Activated CD4-positive, alpha-beta T cell treated with anti-CD3 and anti-CD28 coated beads, Interleukin-2, amount 10 ng/mL, durations not matched to agents 7 days and 5 days (primary cell): ENCODE measurements at regions of chr12 and their contacts with region 1.

Region 1: GRCh38 chr12:89524541-89525285 is at the start of gene GALNT4:
- DNase-seq: peak; percentile 82
- H3K4me3 Mint-ChIP-seq: peak within 1 kb of the TSS; percentile 95
- H3K27ac Mint-ChIP-seq: peak within 1 kb of the TSS; percentile 96
- H3K4me1 Mint-ChIP-seq: peaks cover 64% of the 10 kb centered on the region
- H3K27me3 Mint-ChIP-seq: no peaks in the 10 kb centered on the region
- total RNA-seq, gene GALNT4: 12.2 to 13.3 TPM

Region 2: DNA sequence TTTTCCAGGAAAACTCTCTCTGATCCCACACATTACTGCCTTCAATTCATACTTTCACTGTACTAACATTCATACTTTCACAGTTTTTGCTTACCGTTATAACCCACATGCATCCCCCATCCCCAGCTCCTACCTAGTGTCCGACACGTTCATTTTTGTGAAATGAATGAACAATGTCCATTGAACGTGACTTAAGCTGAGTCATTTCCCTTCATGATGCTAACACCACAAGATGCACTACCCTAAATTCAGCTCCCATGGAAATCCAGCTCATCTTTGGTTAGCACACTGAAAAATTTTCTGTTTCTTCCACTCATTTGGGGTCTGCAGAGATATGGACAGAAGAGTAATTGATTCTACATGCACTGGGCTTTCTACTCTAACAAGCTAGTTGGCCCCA is 84.8 kb before region 1 on chr12:
- CTCF ChIA-PET with region 1: no interaction called
- POLR2A ChIA-PET with region 1: no interaction called
- DNase-seq: no peak
- H3K4me3 Mint-ChIP-seq: no peak overlapping the region
- H3K27ac Mint-ChIP-seq: no peak overlapping the region
- H3K4me1 Mint-ChIP-seq: peaks cover 9% of the 10 kb centered on the region
- H3K27me3 Mint-ChIP-seq: no peaks in the 10 kb centered on the region

Region 3: GRCh38 chr12:89451841-89452251 is 72.9 kb before region 1 on chr12:
- CTCF ChIA-PET with region 1: no interaction called
- POLR2A ChIA-PET with region 1: no interaction called
- DNase-seq: no peak
- H3K4me3 Mint-ChIP-seq: no peak overlapping the region
- H3K27ac Mint-ChIP-seq: no peak overlapping the region
- H3K4me1 Mint-ChIP-seq: peaks cover 24% of the 10 kb centered on the region
- H3K27me3 Mint-ChIP-seq: no peaks in the 10 kb centered on the region

Region 4: GRCh38 chr12:89461649-89462612 is 62.8 kb before region 1 on chr12:
- CTCF ChIA-PET with region 1: interaction called, 15 read pairs
- POLR2A ChIA-PET with region 1: no interaction called
- DNase-seq: no peak
- H3K4me3 Mint-ChIP-seq: peak overlapping the region; percentile 42
- H3K27ac Mint-ChIP-seq: peak overlapping the region; percentile 73
- H3K4me1 Mint-ChIP-seq: peaks cover 56% of the 10 kb centered on the region
- H3K27me3 Mint-ChIP-seq: no peaks in the 10 kb centered on the region

Region 5: DNA sequence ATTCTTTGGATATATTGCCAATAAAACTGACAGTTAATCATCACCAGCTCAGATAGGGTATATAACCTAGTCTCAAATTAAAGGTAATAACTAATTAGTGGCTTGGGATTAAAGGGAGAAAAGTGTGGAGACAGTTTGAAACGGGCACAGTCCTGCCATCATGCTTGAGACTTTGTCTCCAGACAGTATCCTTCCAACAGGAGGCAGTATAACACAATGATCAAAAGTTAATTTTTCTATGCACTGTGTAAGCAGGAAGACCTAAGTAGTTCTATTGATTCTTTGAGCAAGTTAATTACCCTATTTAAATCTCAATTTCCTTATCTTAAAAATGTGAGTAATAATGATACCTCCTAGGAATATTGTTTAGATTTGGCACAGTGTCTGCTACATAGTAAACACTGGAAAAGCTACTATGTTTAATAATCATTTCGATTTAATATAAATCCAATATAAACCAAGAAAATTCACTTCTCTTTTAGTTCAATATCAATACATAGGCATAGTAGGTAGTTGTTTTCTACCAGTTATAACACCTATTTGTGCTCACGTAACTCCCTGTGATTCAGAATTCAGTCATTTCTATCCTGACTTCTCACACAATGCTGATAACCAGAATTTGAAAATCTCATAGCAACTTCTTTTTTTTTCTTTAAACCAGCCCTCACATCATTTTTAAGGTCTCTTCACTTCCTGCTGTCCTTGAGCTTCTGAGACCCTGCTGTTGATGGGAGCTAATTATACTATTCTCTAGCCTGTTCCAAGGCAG is 53.8 kb before region 1 on chr12:
- CTCF ChIA-PET with region 1: interaction called, 13 read pairs
- POLR2A ChIA-PET with region 1: no interaction called
- DNase-seq: peak; percentile 36
- H3K4me3 Mint-ChIP-seq: no peak overlapping the region
- H3K27ac Mint-ChIP-seq: peak overlapping the region; percentile 79
- H3K4me1 Mint-ChIP-seq: peaks cover 77% of the 10 kb centered on the region
- H3K27me3 Mint-ChIP-seq: no peaks in the 10 kb centered on the region